ENCODE measurements at regions of chr1 and their contacts with region 1.

Region 1: DNA sequence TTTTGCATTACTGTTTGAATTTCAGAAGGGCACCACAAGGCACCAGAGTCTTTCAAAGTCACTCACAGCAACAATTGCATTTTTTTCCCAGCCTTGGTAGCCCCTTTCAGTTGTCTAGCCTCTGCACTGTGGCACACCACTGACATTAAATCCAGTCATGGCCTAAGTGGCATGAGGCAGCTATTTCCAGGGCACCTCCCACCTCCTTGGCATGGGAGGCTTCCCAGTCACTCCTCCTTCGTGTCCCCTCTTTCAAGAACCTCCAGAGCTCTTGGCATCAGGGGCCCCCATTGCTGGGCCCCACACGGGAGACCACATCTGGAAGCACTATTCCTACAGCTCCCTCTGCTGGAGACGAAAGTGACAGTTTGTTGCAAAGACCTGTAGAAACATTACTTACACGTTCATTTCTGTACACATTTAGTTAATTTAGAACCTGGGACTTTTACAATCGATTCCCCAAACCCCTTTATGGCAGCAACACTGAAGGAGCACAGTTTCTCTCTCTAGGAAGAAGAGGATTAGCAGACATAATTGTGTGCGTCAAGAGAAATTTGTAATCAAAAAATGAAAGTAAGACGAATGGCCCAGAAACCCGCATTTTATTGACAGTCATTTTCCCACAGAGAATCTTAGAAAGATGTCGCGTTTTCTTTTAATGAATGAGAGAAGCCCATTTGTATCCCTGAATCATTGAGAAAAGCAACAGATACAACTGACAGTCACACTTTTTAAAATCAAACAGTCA is 5.7 kb upstream of the CHD5 start:
- DNase-seq: no peak

Region 2: DNA sequence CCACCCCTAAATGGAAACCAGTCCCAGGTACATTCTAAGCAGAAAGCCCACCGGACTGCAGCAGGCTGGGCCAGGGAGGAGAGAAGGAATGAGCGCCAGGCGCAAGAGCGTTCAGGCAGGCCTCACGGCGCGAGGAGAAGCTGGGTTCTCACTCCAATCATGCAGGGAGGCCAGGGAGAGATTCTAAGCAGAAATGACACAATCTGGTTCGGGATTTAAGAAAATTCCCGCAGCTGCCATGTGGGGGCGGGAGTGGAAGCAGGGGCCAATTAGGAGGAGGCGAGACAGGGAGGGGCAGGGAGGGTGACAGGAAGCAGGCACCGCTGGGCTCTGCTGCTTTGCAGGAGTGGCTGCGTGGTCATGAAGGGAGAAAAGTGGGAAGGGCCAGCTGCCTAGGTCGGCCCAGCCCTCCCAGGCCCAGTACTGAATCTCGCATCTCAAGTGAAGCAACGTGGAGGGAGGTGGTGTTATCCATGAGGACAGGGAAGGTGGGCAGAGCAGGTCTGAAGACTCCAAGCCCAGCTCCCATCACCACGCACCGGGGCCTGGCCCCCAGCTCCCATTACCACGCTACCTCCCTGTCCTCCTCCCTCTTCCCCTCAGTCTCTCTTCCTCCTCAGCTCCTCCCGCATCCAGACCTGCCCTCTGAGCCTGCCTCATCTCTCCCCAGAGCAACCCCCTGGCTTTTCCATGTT is 205.3 kb before region 1 on chr1:
- CTCF ChIA-PET with region 1: no interaction called
- POLR2A ChIA-PET with region 1: no interaction called
- DNase-seq: peak; percentile 71

Region 3: DNA sequence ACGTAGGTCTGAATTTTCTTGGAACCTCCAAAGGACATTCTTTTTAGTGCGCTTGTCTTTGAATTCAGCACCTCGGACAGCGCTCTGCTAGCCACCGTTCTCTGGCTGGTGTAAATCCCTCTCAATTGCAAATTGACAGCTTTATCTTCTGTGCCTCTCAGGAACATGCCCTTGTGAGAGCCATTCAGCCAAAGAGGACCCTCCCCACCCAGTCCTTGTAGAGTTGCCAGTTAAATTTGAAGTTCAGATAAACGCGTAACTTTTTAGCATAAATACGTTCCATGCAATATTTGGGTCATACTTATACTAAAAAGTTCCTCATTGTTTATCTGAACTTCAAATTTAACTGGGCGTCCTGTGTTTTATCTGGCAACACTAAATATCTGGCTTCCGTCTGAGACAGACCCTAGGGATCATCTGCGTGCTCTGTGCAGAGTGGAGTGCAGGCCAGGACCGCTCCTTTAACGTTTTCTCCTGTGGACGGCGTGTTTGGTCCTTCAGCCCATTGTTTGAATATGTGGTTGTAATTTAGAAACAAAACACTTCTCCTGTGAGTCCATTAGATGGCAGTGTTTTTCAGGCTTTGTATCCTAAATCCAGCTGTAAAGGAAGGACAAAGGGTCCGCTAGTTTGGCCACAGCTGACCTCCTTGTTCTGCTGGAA is 133.1 kb before region 1 on chr1:
- CTCF ChIA-PET with region 1: interaction called, 12 read pairs
- POLR2A ChIA-PET with region 1: no interaction called
- DNase-seq: peak; percentile 74

Region 4: GRCh38 chr1:6287431-6287886 is 101.7 kb after region 1 on chr1:
- CTCF ChIA-PET with region 1: no interaction called
- POLR2A ChIA-PET with region 1: no interaction called
- DNase-seq: no peak

Measured in HEK293T (cell line).